PC-3 (cell line): ENCODE measurements at regions of chr6 and their contacts with region 1.

Region 1: DNA sequence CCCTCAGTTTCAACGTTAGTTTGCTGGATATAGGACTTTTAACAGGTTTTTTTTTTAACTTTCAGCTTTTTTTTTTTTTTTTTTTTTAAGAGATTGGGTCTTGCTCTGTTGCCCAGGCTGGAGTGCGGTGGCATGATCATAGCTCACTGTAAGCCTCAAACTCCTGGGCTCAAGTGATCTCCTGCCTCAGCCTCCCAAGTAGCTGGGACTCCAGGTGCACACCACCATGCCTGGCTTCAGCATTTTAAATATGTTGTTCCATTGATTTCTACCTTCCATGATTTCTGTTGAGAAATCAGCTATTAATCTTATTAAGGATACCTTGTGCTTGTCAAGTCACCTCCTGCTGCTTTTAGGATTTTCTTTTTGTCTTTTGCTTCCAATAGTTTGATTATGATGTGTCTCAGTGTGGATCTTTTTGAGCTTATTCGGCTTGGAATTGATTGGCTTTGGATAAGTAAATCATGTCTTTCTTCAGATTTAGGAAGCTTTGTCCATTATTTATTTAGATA is 52.0 kb downstream of the CDYL start:
- DNase-seq: no peak
- ATAC-seq: no peak
- H3K4me3 ChIP-seq: no peak overlapping the region
- H3K27ac ChIP-seq: no peak overlapping the region
- H3K4me1 ChIP-seq: no peaks in the 10 kb centered on the region
- H3K27me3 ChIP-seq: no peaks in the 10 kb centered on the region
- CTCF ChIP-seq: no peak

Region 2: DNA sequence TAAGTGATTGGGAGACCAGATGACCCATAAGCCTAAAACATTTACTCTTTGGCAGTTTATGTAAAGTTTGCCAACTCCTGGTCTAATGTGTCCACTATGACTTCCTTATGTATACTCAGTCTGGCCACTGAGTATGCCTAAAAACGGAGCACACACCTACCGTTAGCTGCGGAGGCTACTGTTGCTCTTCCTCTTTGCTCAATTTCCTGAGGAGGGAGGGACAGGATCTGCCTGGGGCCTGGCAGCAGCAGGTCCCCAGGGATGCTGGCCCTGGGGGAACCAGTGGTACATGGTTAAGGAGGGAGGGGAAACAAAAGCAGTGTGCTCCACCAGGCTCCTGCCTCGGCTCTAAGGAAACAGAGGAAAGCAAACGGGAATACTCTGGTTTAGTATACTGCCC is 61.5 kb after region 1 on chr6:
- CTCF ChIA-PET with region 1: no interaction called
- POLR2A ChIA-PET with region 1: no interaction called
- intact Hi-C with region 1: no loop called
- DNase-seq: no peak
- ATAC-seq: no peak
- H3K4me3 ChIP-seq: no peak overlapping the region
- H3K27ac ChIP-seq: no peak overlapping the region
- H3K4me1 ChIP-seq: no peaks in the 10 kb centered on the region
- H3K27me3 ChIP-seq: no peaks in the 10 kb centered on the region
- CTCF ChIP-seq: no peak

Region 3: DNA sequence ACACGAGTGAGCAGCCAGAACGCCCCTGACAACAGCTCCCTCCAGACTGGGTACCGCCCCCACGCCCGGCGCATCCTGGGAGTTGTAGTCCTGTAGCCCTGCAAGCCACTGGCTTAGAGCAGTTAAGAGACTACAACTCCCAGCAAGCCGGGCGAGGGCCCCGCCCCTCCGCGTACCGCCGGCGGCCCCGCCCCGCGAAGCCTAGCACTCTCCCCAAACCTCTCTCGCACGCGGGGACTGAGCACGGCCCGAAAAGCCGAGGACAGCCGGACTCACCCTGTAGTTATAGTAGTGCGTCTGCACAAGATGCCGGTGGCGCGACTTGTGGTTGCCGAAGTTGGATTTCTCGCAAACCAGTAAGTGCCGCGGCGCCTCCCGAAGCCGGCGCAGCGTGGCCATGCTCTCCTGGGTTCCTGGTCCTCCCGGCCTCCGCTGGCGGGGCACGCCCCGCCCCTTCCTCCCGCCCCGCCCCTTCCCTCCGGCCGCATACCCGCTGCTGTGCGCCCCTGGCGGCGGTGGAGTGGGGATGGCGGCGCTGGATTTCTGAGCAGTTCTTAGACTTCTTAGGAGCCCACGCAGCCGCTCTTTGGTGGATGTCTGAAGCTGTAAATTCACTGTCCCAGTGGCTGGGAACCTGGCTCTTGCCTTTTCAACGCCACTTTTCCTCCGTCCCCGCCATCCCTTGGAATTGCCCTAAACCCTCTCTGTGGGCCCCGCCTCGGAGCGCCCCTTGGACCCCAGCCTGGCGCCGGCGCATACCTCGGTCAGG is 175.5 kb after region 1 on chr6 and contains the start of gene RPP40:
- CTCF ChIA-PET with region 1: no interaction called
- POLR2A ChIA-PET with region 1: interaction called, 16 read pairs
- intact Hi-C with region 1: no loop called
- DNase-seq: peak; percentile 98
- ATAC-seq: peak; percentile 98
- H3K4me3 ChIP-seq: peak within 1 kb of the TSS; percentile 82
- H3K27ac ChIP-seq: peak within 1 kb of the TSS; percentile 42; the same call in 1 of the 2 replicates
- H3K4me1 ChIP-seq: peaks cover 11% of the 10 kb centered on the region; the same call in 1 of the 2 replicates
- H3K27me3 ChIP-seq: no peaks in the 10 kb centered on the region
- CTCF ChIP-seq: peak; percentile 84
- total RNA-seq, gene RPP40: 29.3 and 37.9 TPM in 2 replicates